BJ (cell line): ENCODE measurements at regions of chr17 and their contacts with region 1.

Region 1: DNA sequence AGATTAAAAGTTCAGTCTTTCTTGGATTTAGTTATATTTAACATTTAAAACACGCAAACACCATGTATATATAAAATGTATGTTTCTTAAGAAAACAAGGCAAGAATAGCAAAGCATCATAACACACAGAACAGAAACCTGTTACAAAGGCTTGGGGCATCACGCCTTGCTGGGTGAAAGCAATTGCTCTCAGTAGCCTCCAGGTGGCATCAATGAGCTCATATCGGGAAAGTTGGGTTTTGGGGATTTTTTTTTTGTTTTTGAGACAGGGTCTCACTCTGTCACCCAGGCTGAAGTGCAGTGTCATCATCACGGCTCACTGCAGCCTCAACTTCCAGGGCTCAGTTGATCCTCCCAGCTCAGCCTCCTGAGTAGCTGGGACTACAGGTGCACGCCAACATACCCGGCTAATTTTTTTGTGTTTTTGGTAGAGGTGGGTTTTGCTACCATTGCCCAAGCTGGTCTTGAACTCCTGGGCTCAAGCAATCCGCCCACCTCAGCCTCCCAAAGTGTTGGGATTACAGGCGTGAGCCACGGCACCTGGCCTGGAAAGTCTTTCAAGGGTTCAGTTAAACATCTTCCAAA is 56.9 kb downstream of the CYB5D2 start:
- DNase-seq: no peak
- H3K4me3 ChIP-seq: no peak overlapping the region
- H3K27me3 ChIP-seq: no peaks in the 10 kb centered on the region
- CTCF ChIP-seq: peak; percentile 75

Region 2: GRCh38 chr17:4187076-4187475 is 12.8 kb before region 1 on chr17:
- CTCF ChIA-PET with region 1: interaction called, 12 read pairs
- POLR2A ChIA-PET with region 1: interaction called, 5 read pairs
- DNase-seq: no peak
- H3K4me3 ChIP-seq: no peak overlapping the region
- H3K27me3 ChIP-seq: no peaks in the 10 kb centered on the region
- CTCF ChIP-seq: no peak

Region 3: DNA sequence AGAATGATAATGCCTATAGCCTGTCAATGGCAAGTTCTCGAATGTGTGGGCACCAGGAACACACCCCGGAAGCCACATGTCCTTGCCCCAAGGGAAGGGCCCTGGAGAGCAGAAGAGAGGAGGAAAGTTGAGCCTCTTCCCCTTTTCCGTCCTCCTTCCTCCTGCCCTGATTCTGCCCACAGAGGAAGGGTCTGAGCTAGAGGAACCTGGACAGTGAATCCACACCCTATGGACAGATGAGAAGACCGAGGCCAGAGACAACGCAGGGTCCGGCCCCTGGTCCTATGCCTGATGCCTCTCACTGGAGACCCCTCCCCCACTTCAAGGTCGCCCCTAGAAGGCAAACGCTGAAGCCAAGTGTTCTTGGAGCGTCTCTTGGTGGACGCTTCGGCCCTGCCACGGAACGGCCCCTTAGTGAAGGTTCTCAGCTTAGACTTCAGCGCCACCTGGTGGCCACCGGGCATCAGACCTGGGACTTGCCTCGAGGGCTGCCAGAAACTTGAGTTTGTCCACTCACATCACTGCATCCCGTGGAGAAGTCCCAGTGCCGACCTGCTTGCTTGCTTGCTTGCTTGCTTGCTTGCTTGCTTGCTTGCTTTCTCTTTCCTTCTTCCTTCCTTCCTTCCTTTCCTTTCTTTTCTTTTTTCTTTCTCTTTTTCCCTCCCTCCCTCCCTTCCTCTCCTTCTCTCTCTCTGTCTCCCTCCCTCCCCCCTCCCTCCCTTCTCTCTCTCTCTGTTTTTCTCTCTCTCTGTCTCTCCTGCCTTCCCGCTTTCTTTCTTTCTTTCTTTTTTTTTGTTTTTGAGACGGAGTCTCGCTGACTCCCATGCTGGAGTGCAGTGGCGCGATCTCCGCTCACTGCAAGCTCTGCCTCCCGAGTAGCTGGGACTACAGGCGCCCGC is 213.3 kb after region 1 on chr17:
- CTCF ChIA-PET with region 1: interaction called, 30 read pairs
- POLR2A ChIA-PET with region 1: no interaction called
- DNase-seq: no peak
- H3K4me3 ChIP-seq: no peak overlapping the region
- H3K27me3 ChIP-seq: no peaks in the 10 kb centered on the region
- CTCF ChIP-seq: peak; percentile 89